ENCODE measurements at regions of chr20 and their contacts with region 1.

Region 1: GRCh38 chr20:4108495-4109306 is 93.3 kb upstream of the RNF24 start:
- DNase-seq: peak; percentile 88
- H3K4me3 Mint-ChIP-seq: no peak overlapping the region
- H3K27ac Mint-ChIP-seq: no peak overlapping the region
- H3K4me1 Mint-ChIP-seq: peaks cover 14% of the 10 kb centered on the region
- H3K27me3 Mint-ChIP-seq: no peaks in the 10 kb centered on the region
- CTCF ChIP-seq: peak; percentile 95

Region 2: GRCh38 chr20:4119854-4120209 is 11.1 kb after region 1 on chr20:
- CTCF ChIA-PET with region 1: interaction called, 13 read pairs
- POLR2A ChIA-PET with region 1: interaction called, 4 read pairs
- intact Hi-C with region 1: no loop called
- DNase-seq: peak; percentile 80
- H3K4me3 Mint-ChIP-seq: peak overlapping the region; percentile 57
- H3K27ac Mint-ChIP-seq: peak overlapping the region; percentile 88
- H3K4me1 Mint-ChIP-seq: peaks cover 23% of the 10 kb centered on the region
- H3K27me3 Mint-ChIP-seq: no peaks in the 10 kb centered on the region
- CTCF ChIP-seq: no peak

Region 3: DNA sequence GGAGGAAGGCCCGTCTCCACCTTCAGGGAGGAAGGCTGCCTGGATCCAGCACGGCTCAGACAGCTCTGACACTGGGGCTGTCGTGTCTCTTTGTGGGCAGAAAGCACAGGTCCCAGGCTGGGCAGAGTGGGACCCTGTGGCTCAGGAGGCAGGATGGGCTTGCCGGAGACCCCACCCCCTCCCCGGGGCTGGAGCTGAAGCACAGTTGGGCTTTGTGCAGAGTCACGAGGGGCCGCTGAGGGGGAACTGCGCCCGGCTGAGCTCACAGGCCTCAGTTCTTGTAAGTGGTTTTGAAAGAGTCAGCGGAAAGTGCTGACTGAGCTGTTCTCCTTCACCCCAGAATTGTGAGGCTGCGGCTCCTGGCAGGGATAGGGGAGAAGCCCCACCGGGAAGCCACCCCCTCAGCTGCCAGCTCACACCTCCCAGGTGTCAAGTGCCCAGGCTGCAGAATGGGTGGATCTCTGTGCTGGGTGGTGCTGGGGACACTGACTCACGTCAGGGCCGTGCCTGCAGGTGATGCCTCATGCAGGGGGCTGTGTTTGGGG is 52.1 kb after region 1 on chr20:
- CTCF ChIA-PET with region 1: interaction called, 35 read pairs
- POLR2A ChIA-PET with region 1: interaction called, 6 read pairs
- intact Hi-C with region 1: no loop called
- DNase-seq: peak; percentile 77
- H3K4me3 Mint-ChIP-seq: peak overlapping the region; percentile 23
- H3K27ac Mint-ChIP-seq: peak overlapping the region; percentile 76
- H3K4me1 Mint-ChIP-seq: peaks cover 50% of the 10 kb centered on the region
- H3K27me3 Mint-ChIP-seq: no peaks in the 10 kb centered on the region
- CTCF ChIP-seq: no peak

Region 4: DNA sequence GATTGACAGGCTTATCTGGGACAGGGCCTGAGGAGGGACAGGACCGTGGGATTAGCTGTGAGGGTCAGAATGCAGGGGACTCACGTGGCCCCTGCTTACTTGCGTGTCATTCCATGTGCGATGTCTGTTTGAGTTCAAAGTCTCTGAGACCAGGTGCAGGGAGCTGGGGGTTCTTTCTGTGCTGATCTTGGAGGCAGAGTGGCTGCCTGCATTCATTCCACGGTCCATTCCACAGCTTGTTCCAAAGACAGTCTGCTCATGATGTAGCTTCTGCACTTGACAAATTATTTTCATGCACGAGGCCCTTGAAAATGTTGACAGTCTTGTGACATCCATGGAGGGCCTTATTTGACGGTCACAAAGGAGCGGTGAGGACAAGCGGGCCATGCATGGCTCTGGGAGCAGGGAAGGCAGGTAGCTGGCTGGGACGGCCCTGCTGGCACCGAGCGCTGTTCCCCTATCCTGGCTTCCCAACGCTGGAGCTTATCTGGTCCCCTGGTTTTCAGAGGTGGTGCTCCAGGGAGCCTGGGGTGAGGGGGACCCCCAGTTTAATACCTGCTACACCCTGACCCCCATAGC is 62.9 kb after region 1 on chr20:
- CTCF ChIA-PET with region 1: interaction called, 35 read pairs
- POLR2A ChIA-PET with region 1: interaction called, 10 read pairs
- intact Hi-C with region 1: no loop called
- DNase-seq: peak; percentile 21
- H3K4me3 Mint-ChIP-seq: peak overlapping the region; percentile 67
- H3K27ac Mint-ChIP-seq: peak overlapping the region; percentile 92
- H3K4me1 Mint-ChIP-seq: peaks cover 11% of the 10 kb centered on the region
- H3K27me3 Mint-ChIP-seq: no peaks in the 10 kb centered on the region
- CTCF ChIP-seq: no peak

Region 5: DNA sequence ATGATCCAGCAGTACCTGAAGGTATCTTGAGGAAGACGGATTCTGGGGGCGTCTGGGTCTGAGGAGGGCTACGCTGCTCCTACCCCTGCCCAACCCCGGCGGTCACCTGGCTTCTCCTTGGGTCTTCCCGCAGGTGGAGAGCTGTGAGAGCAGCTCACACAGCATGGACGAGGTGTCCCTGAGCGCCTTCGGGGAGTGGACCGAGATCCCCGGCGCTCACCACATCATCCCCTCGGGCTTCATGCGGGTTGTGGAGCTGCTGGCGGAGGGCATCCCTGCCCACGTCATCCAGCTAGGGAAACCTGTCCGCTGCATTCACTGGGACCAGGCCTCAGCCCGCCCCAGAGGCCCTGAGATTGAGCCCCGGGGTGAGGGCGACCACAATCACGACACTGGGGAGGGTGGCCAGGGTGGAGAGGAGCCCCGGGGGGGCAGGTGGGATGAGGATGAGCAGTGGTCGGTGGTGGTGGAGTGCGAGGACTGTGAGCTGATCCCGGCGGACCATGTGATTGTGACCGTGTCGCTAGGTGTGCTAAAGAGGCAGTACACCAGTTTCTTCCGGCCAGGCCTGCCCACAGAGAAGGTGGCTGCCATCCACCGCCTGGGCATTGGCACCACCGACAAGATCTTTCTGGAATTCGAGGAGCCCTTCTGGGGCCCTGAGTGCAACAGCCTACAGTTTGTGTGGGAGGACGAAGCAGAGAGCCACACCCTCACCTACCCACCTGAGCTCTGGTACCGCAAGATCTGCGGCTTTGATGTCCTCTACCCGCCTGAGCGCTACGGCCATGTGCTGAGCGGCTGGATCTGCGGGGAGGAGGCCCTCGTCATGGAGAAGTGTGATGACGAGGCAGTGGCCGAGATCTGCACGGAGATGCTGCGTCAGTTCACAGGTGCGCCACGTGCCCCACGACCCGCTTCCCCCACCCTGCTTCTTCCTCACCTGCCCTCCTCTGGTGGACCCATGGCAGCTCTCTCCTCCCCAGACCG is 73.5 kb after region 1 on chr20:
- CTCF ChIA-PET with region 1: interaction called, 23 read pairs
- POLR2A ChIA-PET with region 1: no interaction called
- intact Hi-C with region 1: no loop called
- DNase-seq: no peak
- H3K4me3 Mint-ChIP-seq: no peak overlapping the region
- H3K27ac Mint-ChIP-seq: no peak overlapping the region
- H3K4me1 Mint-ChIP-seq: no peaks in the 10 kb centered on the region
- H3K27me3 Mint-ChIP-seq: no peaks in the 10 kb centered on the region
- CTCF ChIP-seq: no peak

Region 6: DNA sequence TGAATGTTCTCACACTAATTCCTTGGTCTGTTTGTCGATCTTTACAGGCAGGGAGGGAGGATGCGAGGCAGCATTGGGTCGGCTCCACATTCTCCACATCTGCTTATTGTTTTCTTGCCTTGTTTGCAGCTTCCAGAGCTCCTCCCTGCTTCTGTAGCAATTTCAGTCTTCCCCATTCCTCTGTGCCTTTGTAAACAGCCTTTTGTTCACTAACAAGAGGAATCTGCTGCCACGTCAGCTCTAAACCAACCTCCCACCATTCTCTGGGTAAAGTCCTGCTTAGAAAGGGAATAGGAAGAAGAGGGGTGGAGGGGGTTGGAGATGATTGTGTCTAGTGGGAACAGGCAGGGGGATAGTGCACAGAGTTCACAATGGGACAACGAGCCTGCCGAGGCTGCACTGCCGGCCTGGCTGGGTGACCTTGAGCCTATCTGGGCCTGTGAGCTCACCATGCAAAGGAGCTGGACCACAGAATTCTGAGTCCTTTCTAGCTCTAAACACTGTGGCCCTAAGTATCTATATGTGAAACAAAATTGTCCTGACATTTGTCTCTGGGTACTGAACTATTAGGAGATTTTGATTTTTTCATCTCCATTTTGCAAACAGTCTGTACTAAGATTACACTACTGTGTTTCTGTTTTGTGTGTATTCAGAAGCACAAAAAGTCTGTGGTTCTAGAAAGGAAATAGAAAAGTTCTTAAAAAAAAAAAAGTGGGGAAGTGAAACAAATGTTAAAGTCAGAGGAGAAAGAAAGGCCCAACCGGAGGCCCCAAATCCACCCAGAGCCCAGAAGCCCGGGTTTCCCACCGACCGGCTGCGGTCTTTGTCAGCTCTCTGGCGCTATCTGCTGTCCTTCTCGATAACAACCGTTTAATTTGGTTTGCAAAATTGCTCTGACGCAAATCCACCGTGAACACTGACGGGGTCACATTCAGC is 611.6 kb after region 1 on chr20:
- CTCF ChIA-PET with region 1: no interaction called
- POLR2A ChIA-PET with region 1: no interaction called
- intact Hi-C with region 1: loop called (anchors 10 kb)
- DNase-seq: peak; percentile 72
- H3K4me3 Mint-ChIP-seq: no peak overlapping the region
- H3K27ac Mint-ChIP-seq: no peak overlapping the region
- H3K4me1 Mint-ChIP-seq: peaks cover 7% of the 10 kb centered on the region
- H3K27me3 Mint-ChIP-seq: no peaks in the 10 kb centered on the region
- CTCF ChIP-seq: peak; percentile 86

Measured in MCF 10A (cell line).